WTC11 (cell line): ENCODE measurements at regions of chr9 and their contacts with region 1.

Region 1: GRCh38 chr9:33737811-33738606 is 57.4 kb upstream of the PRSS3 start:
- DNase-seq: peak; percentile 64
- ATAC-seq: peak; percentile 99
- H3K4me3 Mint-ChIP-seq: no peak overlapping the region
- H3K27ac Mint-ChIP-seq: no peak overlapping the region
- H3K4me1 Mint-ChIP-seq: peaks cover 2% of the 10 kb centered on the region
- H3K27me3 Mint-ChIP-seq: no peaks in the 10 kb centered on the region
- CTCF ChIP-seq: peak; percentile 48; the same call in 1 of the 2 replicates

Region 2: GRCh38 chr9:33721674-33722358 is 16.2 kb before region 1 on chr9:
- CTCF ChIA-PET with region 1: interaction called, 30 read pairs
- POLR2A ChIA-PET with region 1: no interaction called
- DNase-seq: peak; percentile 92
- ATAC-seq: peak; percentile 78
- H3K4me3 Mint-ChIP-seq: no peak overlapping the region; the same call in 1 of the 2 replicates
- H3K27ac Mint-ChIP-seq: no peak overlapping the region
- H3K4me1 Mint-ChIP-seq: peaks cover 2% of the 10 kb centered on the region
- H3K27me3 Mint-ChIP-seq: peaks cover 24% of the 10 kb centered on the region
- CTCF ChIP-seq: peak; percentile 100

Region 3: DNA sequence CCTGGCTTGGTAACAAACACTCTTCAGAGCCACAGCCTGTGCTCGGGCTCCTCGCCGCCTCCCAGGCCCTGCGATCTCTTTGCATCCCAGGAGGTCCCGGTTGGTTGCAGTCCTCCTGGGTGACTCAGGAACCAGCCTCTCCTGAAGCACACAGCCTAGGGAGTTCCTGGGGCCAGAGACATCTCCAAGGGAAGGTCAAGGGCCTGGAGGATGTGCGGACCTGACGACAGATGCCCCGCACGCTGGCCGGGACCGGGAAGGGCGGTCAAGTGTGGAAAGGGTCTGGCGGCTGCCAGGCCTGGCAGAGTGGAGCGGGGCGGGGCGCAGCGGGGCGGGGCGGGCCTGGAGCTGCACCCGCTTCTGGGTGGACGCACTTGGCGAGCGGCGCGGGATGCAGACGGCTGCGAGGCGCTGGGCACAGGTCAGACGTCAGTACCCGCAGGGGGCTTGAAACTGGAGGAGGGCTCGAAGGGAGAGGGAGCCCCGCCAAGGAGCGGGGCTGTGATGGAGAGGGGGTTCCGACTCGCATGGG is 12.4 kb after region 1 on chr9:
- CTCF ChIA-PET with region 1: interaction called, 19 read pairs
- POLR2A ChIA-PET with region 1: no interaction called
- DNase-seq: peak; percentile 23
- ATAC-seq: peak; percentile 69
- H3K4me3 Mint-ChIP-seq: peak overlapping the region; percentile 69
- H3K27ac Mint-ChIP-seq: no peak overlapping the region
- H3K4me1 Mint-ChIP-seq: peaks cover 6% of the 10 kb centered on the region
- H3K27me3 Mint-ChIP-seq: peaks cover 48% of the 10 kb centered on the region
- CTCF ChIP-seq: no peak

Region 4: GRCh38 chr9:33778700-33779351 is 40.8 kb after region 1 on chr9:
- CTCF ChIA-PET with region 1: interaction called, 85 read pairs
- POLR2A ChIA-PET with region 1: no interaction called
- DNase-seq: peak; percentile 55
- ATAC-seq: peak; percentile 98
- H3K4me3 Mint-ChIP-seq: no peak overlapping the region
- H3K27ac Mint-ChIP-seq: no peak overlapping the region
- H3K4me1 Mint-ChIP-seq: no peaks in the 10 kb centered on the region
- H3K27me3 Mint-ChIP-seq: peaks cover 3% of the 10 kb centered on the region
- CTCF ChIP-seq: peak; percentile 44

Region 5: DNA sequence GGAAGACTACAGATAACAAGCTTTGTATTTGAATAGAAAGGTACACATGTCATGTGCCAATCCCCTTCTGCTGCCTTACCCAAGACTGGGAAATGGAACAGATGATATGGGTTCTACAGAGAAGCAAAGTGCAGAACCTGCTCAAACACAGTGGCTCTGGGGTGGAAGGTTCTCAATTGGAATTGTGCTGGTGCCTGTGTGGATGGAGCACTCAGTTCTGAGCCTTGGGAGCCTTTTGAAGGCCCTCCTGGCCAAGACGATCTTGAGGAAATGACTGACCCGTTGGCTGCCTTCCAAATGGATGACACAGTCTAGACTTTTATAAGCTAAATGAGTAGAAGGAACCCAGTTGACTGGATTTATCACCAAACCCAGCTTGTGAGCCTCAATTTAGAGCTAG is 53.1 kb after region 1 on chr9:
- CTCF ChIA-PET with region 1: interaction called, 11 read pairs
- POLR2A ChIA-PET with region 1: no interaction called
- DNase-seq: no peak
- ATAC-seq: no peak
- H3K4me3 Mint-ChIP-seq: no peak overlapping the region
- H3K27ac Mint-ChIP-seq: no peak overlapping the region
- H3K4me1 Mint-ChIP-seq: peaks cover 9% of the 10 kb centered on the region
- H3K27me3 Mint-ChIP-seq: peaks cover 3% of the 10 kb centered on the region
- CTCF ChIP-seq: no peak

Region 6: GRCh38 chr9:33852216-33852826 is 114.3 kb after region 1 on chr9:
- CTCF ChIA-PET with region 1: interaction called, 17 read pairs
- POLR2A ChIA-PET with region 1: no interaction called
- DNase-seq: peak; percentile 38
- ATAC-seq: peak; percentile 67
- H3K4me3 Mint-ChIP-seq: no peak overlapping the region
- H3K27ac Mint-ChIP-seq: no peak overlapping the region
- H3K4me1 Mint-ChIP-seq: peaks cover 29% of the 10 kb centered on the region
- H3K27me3 Mint-ChIP-seq: no peaks in the 10 kb centered on the region
- CTCF ChIP-seq: no peak